HepG2 (cell line): ENCODE measurements at regions of chr16 and their contacts with region 1.

Region 1: GRCh38 chr16:3542601-3543373 is 34.4 kb downstream of the NLRC3 start:
- DNase-seq: no peak
- ATAC-seq: peak; percentile 28
- H3K4me3 ChIP-seq: no peak overlapping the region
- H3K27ac ChIP-seq: no peak overlapping the region
- H3K4me1 ChIP-seq: no peaks in the 10 kb centered on the region
- H3K27me3 ChIP-seq: no peaks in the 10 kb centered on the region
- CTCF ChIP-seq: no peak
- EP300 ChIP-seq: no peak
- POLR2A ChIP-seq: no peak
- RAD21 ChIP-seq: no peak

Region 2: DNA sequence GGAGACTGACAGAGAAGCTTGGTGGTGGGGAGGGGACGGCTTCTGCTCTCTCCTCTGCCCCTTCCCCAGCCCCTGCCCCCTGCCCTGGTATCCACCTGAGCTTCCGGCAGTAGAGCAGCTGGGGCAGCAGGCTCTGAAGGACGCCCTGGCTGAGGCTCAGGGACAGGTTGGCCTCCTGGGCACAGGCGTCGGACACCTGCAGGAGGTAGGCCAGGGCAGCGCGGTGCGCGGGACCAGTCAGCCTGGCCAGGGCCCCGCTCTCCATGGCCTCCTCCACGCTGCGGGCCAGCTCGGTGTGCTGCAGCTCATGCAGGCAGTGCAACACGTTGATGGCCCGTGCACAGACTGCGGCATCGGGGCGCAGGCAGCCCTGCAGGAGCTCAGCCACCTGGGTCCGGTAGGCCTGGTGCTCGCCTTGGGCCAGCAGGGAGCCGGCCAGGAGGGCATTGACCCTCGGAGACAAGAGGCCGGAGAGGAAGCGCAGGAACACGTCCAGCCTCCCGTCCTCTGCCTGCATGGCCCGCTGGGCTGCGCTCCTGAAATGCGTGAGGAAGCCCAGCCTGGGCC is 20.2 kb after region 1 on chr16:
- CTCF ChIA-PET with region 1: no interaction called
- POLR2A ChIA-PET with region 1: no interaction called
- in situ Hi-C with region 1: no loop called
- intact Hi-C with region 1: loop called (anchors 2 kb)
- DNase-seq: no peak
- ATAC-seq: no peak; the same call in 2 of the 3 replicates
- H3K4me3 ChIP-seq: no peak overlapping the region
- H3K27ac ChIP-seq: no peak overlapping the region
- H3K4me1 ChIP-seq: no peaks in the 10 kb centered on the region
- H3K27me3 ChIP-seq: peaks cover 5 to 17% of the 10 kb centered on the region in 2 experiments; a peak in 4 of 5 replicates
- CTCF ChIP-seq: no peak
- EP300 ChIP-seq: no peak
- POLR2A ChIP-seq: no peak
- RAD21 ChIP-seq: no peak